Left ventricle myocardium superior (tissue), 1 donor: ENCODE measurements at regions of chr16 and their contacts with region 1.

Region 1: DNA sequence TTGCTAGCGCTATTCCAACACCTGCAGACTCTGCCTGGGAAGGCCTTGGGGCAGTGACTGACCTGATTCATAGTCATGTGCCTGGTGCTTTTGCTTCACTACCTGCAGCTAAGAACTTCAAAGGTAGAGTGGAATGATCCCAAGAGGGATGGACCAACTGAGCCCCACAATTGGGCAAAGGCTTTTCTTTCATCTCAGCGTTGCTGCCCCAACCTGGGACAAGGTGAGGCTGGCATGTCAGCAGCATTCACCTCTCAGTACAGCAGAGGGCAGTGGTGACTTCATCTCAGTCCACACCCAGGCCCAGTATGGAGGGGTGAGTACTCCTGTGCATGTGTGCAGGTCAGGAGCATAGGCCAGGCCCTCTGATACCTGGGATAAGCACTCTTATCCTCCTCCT is 149.6 kb upstream of the GNAO1 start:
- DNase-seq: peak; percentile 33
- ATAC-seq: peak; percentile 92

Region 2: DNA sequence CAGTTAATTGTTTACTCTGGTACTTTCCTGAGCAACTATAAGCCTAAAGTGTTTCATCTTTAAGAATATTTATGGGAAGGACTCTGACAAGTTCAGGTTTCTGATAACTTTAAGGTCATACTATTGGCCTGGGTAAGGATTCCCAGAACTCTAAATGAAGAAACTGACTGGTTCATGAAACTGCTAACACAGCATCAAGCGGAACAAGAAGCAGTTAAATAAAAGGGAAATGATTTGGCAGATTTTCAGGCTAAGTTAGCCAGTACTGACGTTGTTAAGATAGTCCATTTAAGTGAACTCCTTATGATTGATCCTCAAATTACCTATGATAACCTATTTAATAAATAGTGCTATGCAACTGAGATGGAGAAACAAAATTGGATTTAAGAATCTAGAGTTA is 64.9 kb before region 1 on chr16:
- intact Hi-C with region 1: no loop called
- DNase-seq: no peak
- ATAC-seq: no peak

Region 3: DNA sequence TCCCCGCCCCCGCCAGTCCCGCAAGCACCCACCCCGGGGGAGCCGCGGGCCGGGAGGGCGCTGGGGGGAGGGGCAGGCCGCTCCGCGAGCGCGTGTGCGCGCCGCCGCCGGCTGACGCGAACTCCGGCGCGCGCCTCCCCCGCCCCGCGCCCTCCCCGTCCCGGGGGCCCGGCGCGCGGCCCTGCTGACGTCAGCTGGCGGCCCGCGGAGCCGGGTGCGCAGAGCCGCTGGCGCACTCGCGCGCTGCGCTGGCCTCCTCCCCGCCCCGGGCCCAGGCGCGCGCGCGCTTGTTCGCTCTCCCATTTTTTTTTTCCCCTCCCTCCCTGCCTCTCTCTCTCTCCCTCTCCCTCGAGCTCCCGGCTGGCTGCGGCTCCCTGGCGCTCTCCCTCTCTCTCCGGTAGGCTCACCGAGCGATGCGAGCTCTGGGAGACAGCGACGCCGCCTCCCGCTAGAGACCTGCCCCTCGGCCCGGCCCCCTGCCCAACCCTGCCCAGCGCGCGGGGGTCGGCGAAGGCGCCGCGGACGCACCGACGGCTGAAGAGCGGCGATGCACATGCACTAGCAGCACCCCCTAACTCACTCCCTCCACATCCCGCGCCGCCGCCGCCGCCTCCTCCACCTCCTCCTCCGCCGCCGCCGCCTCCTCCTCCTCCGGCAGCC is 149.6 kb after region 1 on chr16 and contains the start of gene GNAO1:
- intact Hi-C with region 1: loop called (anchors 10 kb)
- DNase-seq: peak; percentile 90
- ATAC-seq: peak; percentile 86
- total RNA-seq, gene GNAO1: 23.6 TPM